Activated B cell treated with CpG ODN at 0.5 μM for 24 hours (primary cell): ENCODE measurements at regions of chr14 and their contacts with region 1.

Region 1: DNA sequence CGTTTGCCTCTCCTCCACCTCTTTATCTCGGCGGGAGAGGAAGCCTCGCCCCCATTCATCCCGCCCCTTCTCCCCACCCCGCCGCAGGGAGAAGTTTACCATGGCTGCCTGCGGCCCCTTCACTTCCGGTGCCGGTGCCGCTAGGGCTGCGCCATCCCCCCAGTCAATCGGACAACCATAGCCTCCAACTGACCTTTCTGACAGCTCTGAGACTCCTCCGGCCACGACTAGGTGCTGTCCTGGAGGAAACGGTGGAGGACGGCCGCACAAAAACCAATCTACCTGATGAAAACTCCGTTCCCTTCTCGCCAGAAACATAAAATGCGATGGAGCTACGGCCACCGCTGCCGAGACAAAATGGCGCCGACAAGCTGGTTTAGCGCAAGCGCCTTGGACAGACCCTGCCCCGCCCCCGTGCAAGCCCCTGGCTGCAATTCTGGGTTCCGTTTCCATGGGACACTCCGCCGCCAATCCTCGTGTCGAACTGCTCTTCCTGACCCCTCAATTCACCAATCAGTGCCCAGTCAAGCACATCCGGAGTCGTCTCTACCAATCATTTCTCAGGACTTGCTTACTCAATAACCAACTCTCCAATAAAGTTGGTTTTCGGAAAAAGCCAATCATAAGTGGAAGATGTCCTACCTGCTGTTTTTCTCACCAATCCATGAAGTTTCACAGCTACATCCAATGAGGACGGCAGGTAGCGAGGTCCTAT is 436 bp upstream of the ARID4A start:
- DNase-seq: peak; percentile 91
- ATAC-seq: peak; percentile 83
- H3K4me3 Mint-ChIP-seq: no peak overlapping the region
- H3K27ac Mint-ChIP-seq: no peak overlapping the region
- H3K4me1 Mint-ChIP-seq: peaks cover 50% of the 10 kb centered on the region
- H3K27me3 Mint-ChIP-seq: no peaks in the 10 kb centered on the region
- CTCF ChIP-seq: no peak

Region 2: DNA sequence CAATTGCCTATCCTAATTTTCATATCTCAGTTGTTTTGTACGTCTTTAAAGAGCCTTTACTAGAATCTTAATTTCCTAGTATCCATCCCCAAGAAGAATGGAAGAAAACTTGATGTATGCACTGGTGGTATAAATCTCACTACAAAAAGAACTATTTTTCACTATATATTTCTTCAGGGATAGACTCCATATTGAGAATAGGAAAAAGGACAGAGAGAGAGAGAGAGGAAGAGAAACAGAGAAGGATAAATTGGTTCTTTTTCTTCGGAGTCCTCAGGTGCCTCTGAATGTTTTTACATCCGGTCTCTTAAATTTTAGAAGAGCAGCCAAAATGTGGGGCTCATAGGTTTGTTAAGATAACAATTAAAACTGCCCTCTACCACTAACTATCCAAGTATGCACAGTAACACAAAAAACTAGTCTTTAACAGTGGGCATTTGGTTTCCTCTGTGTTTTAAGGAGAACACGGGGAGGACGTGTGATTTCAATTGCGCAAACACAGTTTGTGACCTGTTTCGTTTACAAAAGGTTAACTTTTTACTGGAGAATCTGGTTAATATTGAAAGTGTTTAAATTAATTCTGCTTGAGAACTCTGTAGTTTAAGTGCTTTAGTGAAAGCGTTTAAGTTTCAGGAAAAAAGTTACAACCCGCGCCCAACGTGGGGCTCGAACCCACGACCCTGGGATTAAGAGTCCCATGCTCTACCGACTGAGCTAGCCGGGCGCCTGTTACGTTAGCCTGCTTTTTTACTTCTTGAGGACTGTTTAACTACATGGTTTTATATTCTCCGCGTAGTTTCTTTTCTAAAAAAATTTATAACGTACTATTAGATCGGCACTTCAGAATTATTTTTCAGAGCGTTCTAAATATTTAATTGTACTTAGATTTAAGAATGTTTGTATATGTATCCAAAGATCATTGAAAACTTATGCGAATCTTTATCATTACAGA is 58.4 kb before region 1 on chr14:
- CTCF ChIA-PET with region 1: interaction called, 7 read pairs
- POLR2A ChIA-PET with region 1: interaction called, 56 read pairs
- intact Hi-C with region 1: loop called (anchors 1 kb)
- DNase-seq: peak; percentile 63
- ATAC-seq: peak; percentile 10
- H3K4me3 Mint-ChIP-seq: no peak overlapping the region
- H3K27ac Mint-ChIP-seq: no peak overlapping the region
- H3K4me1 Mint-ChIP-seq: peaks cover 25% of the 10 kb centered on the region
- H3K27me3 Mint-ChIP-seq: peaks cover 2% of the 10 kb centered on the region
- CTCF ChIP-seq: no peak

Region 3: GRCh38 chr14:58258156-58258555 is 39.8 kb before region 1 on chr14:
- CTCF ChIA-PET with region 1: interaction called, 3 read pairs
- POLR2A ChIA-PET with region 1: interaction called, 6 read pairs
- intact Hi-C with region 1: loop called (anchors 5 kb)
- DNase-seq: no peak
- ATAC-seq: no peak
- H3K4me3 Mint-ChIP-seq: no peak overlapping the region
- H3K27ac Mint-ChIP-seq: no peak overlapping the region
- H3K4me1 Mint-ChIP-seq: no peaks in the 10 kb centered on the region
- H3K27me3 Mint-ChIP-seq: no peaks in the 10 kb centered on the region
- CTCF ChIP-seq: no peak

Region 4: DNA sequence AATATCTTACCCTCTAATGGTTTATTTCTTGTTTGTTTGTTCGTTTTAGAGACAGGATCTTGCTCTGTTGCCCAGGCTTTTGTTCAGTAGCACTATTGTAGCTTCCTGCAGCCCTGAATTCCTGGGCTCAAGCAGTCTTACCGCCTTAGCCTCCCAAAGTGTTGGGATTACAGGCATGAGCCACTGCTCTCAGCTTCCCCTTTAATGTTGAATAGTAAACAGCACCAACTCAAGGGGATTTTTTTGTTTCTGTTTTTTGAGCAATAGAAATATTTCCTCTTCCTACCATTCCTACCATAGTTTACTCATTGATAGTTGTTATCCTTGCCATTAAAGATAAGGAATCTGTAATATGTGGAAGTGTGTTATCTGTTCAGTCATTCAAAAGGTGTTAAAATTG is 11.2 kb after region 1 on chr14:
- CTCF ChIA-PET with region 1: no interaction called
- POLR2A ChIA-PET with region 1: interaction called, 11 read pairs
- intact Hi-C with region 1: no loop called
- DNase-seq: no peak
- ATAC-seq: no peak
- H3K4me3 Mint-ChIP-seq: no peak overlapping the region
- H3K27ac Mint-ChIP-seq: peak overlapping the region; percentile 41
- H3K4me1 Mint-ChIP-seq: peaks cover 1% of the 10 kb centered on the region
- H3K27me3 Mint-ChIP-seq: no peaks in the 10 kb centered on the region
- CTCF ChIP-seq: no peak

Region 5: GRCh38 chr14:58395812-58396788 is 98.2 kb after region 1 on chr14 and contains the start of gene TOMM20L:
- CTCF ChIA-PET with region 1: no interaction called
- POLR2A ChIA-PET with region 1: interaction called, 16 read pairs
- intact Hi-C with region 1: no loop called
- DNase-seq: peak; percentile 83
- ATAC-seq: peak; percentile 92
- H3K4me3 Mint-ChIP-seq: peak within 1 kb of the TSS; percentile 83
- H3K27ac Mint-ChIP-seq: peak within 1 kb of the TSS; percentile 77
- H3K4me1 Mint-ChIP-seq: peaks cover 14% of the 10 kb centered on the region
- H3K27me3 Mint-ChIP-seq: no peaks in the 10 kb centered on the region
- CTCF ChIP-seq: peak; percentile 76
- total RNA-seq, gene TOMM20L: 0.37 TPM in 1 of 2 replicates, not detected in the other

Region 6: DNA sequence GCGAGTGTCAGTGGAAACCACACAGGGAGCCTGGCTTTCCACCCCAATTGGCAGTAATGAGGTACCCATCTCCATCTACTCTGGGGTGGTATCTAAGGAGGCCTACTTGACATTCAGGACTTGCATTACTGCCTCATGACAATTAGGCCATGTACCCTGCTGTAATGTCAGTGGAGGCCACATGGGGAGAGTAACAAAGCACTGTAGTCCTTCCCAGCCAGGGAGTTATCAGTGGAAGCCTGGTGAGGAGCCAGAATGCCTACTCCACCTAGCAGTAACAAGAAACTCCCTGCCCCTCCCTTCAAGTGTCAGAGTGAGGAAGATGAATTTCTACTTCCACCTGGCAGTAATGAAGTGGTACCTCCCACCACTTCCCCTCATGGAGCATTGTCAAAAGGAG is 116.9 kb after region 1 on chr14:
- CTCF ChIA-PET with region 1: no interaction called
- POLR2A ChIA-PET with region 1: no interaction called
- intact Hi-C with region 1: no loop called
- DNase-seq: no peak
- ATAC-seq: no peak
- H3K4me3 Mint-ChIP-seq: no peak overlapping the region
- H3K27ac Mint-ChIP-seq: no peak overlapping the region
- H3K4me1 Mint-ChIP-seq: peaks cover 11% of the 10 kb centered on the region
- H3K27me3 Mint-ChIP-seq: no peaks in the 10 kb centered on the region
- CTCF ChIP-seq: no peak